ENCODE measurements at regions of chr7 and their contacts with region 1.

Region 1: DNA sequence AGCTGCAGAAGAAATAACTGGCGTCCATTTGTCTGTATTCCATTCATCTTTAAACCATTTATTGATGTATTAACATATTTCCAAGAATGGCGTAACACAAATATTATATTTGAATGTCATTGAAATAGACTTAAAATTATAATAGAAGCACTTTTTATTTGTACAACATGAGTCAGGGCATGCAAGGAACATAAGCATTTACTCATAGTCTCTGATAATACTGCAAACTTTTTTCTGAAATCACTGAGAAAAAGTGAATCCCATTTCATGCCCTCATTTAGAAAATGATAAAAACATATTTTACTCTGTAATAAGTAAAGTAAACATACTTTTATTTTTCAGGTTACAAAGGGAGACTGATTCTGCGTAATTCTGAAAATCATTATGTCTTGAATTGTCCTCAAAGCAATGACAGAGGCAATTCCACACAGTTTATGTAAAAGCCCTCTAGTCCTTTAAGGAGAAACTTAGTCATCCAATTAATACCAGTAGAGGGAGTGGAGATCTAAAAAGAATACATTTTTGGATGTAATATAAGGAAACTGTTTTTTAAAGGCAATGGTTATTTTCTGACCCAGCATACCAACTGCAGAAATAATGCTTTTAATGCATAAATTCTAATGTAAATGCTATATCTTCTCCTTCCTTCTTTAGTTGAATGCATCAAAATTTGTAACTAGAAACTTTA is 58.1 kb downstream of the AGMO start:
- DNase-seq: peak; percentile 76
- H3K4me3 ChIP-seq: no peak overlapping the region
- H3K27ac ChIP-seq: peak overlapping the region; percentile 71
- H3K4me1 ChIP-seq: peaks cover 54% of the 10 kb centered on the region
- H3K27me3 ChIP-seq: no peaks in the 10 kb centered on the region
- CTCF ChIP-seq: no peak
- POLR2A ChIP-seq: no peak

Region 2: GRCh38 chr7:15199482-15199881 is 304.3 kb before region 1 on chr7:
- CTCF ChIA-PET with region 1: no interaction called
- POLR2A ChIA-PET with region 1: no interaction called
- dilution Hi-C with region 1: no loop called
- intact Hi-C with region 1: no loop called
- DNase-seq: peak; percentile 51
- H3K4me3 ChIP-seq: no peak overlapping the region
- H3K27ac ChIP-seq: no peak overlapping the region
- H3K4me1 ChIP-seq: no peaks in the 10 kb centered on the region
- H3K27me3 ChIP-seq: no peaks in the 10 kb centered on the region
- CTCF ChIP-seq: peak; percentile 15 to 16
- POLR2A ChIP-seq: no peak

Region 3: DNA sequence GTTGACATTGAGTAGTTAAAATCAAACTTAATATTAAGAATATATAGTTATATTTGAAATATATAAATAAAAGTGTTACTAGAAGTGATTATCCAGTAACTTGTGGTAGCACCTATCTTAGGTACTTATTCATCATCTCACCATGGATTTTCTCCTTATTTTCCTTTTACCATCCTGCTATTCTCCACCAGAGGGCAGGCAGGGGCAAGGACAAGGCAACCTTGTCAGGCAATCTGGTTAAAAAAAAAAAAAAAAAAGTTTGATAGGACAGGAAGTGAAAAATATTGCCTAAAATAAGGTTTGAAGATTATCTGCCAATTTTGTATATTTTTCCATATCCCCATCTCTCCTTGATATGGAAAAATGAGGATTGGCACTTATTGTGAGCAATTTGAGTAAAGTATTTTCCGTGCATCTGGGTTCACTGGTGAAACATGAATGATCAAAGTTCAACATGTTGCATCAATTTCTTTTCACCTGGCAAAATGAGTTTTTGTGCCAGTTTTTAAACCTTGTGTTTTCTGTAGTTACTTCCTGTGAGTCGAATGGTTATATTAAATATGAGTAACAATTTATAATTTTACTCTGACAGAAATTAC is 198.6 kb before region 1 on chr7:
- CTCF ChIA-PET with region 1: no interaction called
- POLR2A ChIA-PET with region 1: no interaction called
- dilution Hi-C with region 1: no loop called
- intact Hi-C with region 1: loop called (anchors 1 kb)
- DNase-seq: peak; percentile 65
- H3K4me3 ChIP-seq: no peak overlapping the region
- H3K27ac ChIP-seq: no peak overlapping the region
- H3K4me1 ChIP-seq: no peaks in the 10 kb centered on the region
- H3K27me3 ChIP-seq: no peaks in the 10 kb centered on the region
- CTCF ChIP-seq: peak; percentile 61 to 66
- POLR2A ChIP-seq: no peak

Region 4: GRCh38 chr7:15452670-15453069 is 51.1 kb before region 1 on chr7:
- CTCF ChIA-PET with region 1: no interaction called
- POLR2A ChIA-PET with region 1: no interaction called
- dilution Hi-C with region 1: no loop called
- intact Hi-C with region 1: no loop called
- DNase-seq: no peak
- H3K4me3 ChIP-seq: no peak overlapping the region
- H3K27ac ChIP-seq: no peak overlapping the region
- H3K4me1 ChIP-seq: no peaks in the 10 kb centered on the region
- H3K27me3 ChIP-seq: no peaks in the 10 kb centered on the region
- CTCF ChIP-seq: no peak
- POLR2A ChIP-seq: no peak

Region 5: DNA sequence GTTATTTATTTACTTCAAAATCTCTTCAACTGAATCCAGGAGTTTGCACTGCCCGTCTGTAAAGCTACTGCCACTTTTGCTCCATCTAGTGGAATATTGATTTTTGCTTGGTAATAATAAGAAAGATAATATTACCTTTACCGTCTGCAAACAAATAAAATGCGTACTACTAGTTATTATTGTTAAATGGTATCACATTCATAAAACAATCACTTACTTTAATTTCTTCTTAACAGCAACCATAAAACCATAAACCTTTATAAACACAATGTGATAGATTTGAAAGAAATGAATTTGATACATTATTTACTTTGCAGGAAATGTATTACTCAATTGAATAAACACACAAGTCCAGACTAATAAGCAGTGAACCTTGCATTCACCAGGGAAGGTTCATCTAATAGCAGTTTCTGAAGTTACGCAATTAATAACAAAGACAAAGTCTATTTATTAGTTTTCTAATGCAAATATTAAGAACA is 51.7 kb after region 1 on chr7:
- CTCF ChIA-PET with region 1: no interaction called
- POLR2A ChIA-PET with region 1: no interaction called
- dilution Hi-C with region 1: no loop called
- intact Hi-C with region 1: loop called (anchors 1 kb)
- DNase-seq: peak; percentile 73
- H3K4me3 ChIP-seq: peak overlapping the region in 2 of 3 experiments; percentile 12 to 32
- H3K27ac ChIP-seq: peak overlapping the region; percentile 27
- H3K4me1 ChIP-seq: peaks cover 36% of the 10 kb centered on the region
- H3K27me3 ChIP-seq: no peaks in the 10 kb centered on the region
- CTCF ChIP-seq: peak in 1 of 2 donors; percentile 6
- POLR2A ChIP-seq: no peak

Region 6: DNA sequence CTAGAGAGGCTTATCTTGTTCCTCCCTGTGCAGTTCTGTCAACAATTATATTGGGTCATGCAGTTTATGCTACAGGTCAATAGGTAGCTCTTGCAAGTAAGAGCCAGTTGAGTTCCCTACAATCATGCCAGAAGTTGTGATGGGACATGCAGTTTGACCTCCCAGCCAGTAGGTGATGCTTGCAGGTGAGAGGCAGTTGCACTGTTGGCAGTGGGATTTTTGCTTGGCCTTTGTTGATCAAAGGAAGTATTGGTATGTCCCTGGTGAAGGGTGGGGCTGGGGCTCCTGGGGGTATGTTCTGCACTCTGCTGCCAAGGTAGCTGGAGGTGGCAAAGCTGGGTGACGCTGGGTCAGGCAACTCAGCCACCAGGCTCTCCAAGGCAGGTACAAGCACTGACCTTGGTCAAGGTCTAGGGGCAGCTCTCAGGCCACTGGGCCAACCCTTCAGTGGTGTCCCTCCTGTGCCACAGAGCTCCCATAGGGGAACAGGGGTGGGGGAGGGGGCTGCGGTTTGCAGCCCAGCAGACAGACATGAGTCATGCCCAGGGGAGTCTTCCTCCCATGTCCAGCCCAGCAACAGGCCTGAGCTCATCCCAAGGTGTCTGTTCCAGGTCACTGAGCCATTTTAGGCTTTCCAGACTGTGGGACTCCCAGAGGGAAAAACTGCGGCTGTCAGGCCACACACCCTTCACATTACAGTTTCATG is 139.4 kb after region 1 on chr7:
- CTCF ChIA-PET with region 1: no interaction called
- POLR2A ChIA-PET with region 1: no interaction called
- dilution Hi-C with region 1: no loop called
- intact Hi-C with region 1: loop called (anchors 10 kb)
- DNase-seq: no peak
- H3K4me3 ChIP-seq: no peak overlapping the region
- H3K27ac ChIP-seq: no peak overlapping the region
- H3K4me1 ChIP-seq: peaks cover 4% of the 10 kb centered on the region
- H3K27me3 ChIP-seq: no peaks in the 10 kb centered on the region
- CTCF ChIP-seq: no peak
- POLR2A ChIP-seq: no peak

Region 7: GRCh38 chr7:15853832-15854470 is 350.2 kb after region 1 on chr7:
- CTCF ChIA-PET with region 1: no interaction called
- POLR2A ChIA-PET with region 1: no interaction called
- dilution Hi-C with region 1: no loop called
- intact Hi-C with region 1: loop called (anchors 5 kb)
- DNase-seq: peak; percentile 71
- H3K4me3 ChIP-seq: no peak overlapping the region
- H3K27ac ChIP-seq: peak overlapping the region; percentile 86
- H3K4me1 ChIP-seq: peaks cover 32% of the 10 kb centered on the region
- H3K27me3 ChIP-seq: no peaks in the 10 kb centered on the region
- CTCF ChIP-seq: no peak
- POLR2A ChIP-seq: no peak